ENCODE measurements at regions of chr3 and their contacts with region 1.

Region 1: GRCh38 chr3:15268033-15268631 is 62.1 kb downstream of the CAPN7 start:
- DNase-seq: peak; percentile 67 to 93 (median 82)
- ATAC-seq: peak; percentile 28 to 62 (median 43)
- H3K4me3 ChIP-seq: no peak overlapping the region
- H3K4me3 Mint-ChIP-seq: peak overlapping the region in 1 of 3 donors; percentile 73
- H3K27ac ChIP-seq: peak overlapping the region; percentile 72
- H3K27ac Mint-ChIP-seq: peak overlapping the region; percentile 43 to 73
- H3K4me1 ChIP-seq: peaks cover 39 to 82% of the 10 kb centered on the region in 2 experiments
- H3K4me1 Mint-ChIP-seq: peaks cover 76 to 88% (median 85%) of the 10 kb centered on the region in 3 donors
- H3K27me3 ChIP-seq: no peaks in the 10 kb centered on the region
- H3K27me3 Mint-ChIP-seq: no peaks in the 10 kb centered on the region

Region 2: DNA sequence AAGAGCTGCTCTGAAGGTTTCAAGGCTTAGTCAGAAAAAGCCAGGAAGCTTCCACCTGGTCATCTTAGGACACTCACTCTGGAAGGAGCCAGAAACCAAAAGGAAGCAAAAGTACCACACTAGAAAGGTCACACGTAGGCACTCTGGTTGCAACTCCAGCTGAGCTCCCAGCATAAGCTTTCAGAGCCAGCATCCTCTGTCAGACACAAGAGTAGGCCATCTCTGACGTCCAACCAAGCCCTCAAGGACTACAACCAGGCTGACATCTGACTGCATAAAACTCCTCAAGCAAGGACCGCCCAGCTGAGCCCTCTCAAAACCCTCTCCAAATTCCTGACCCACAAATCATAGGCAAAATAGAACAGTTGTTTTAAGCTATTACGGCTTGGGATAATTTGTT is 51.4 kb after region 1 on chr3:
- CTCF ChIA-PET with region 1: interaction called, 6 to 14 read pairs
- POLR2A ChIA-PET with region 1: interaction called in 1 of 2 experiments, 4 read pairs
- DNase-seq: no peak
- ATAC-seq: no peak
- H3K4me3 ChIP-seq: no peak overlapping the region
- H3K4me3 Mint-ChIP-seq: peak overlapping the region in 2 of 3 donors; percentile 17 to 21
- H3K27ac ChIP-seq: no peak overlapping the region
- H3K27ac Mint-ChIP-seq: peak overlapping the region; percentile 80 to 88
- H3K4me1 ChIP-seq: peaks cover 15 to 59% of the 10 kb centered on the region in 2 experiments
- H3K4me1 Mint-ChIP-seq: peaks cover 70 to 86% (median 81%) of the 10 kb centered on the region in 3 donors
- H3K27me3 ChIP-seq: no peaks in the 10 kb centered on the region
- H3K27me3 Mint-ChIP-seq: no peaks in the 10 kb centered on the region

Region 3: GRCh38 chr3:15332405-15333098 is 64.4 kb after region 1 on chr3 and contains the start of gene SH3BP5:
- CTCF ChIA-PET with region 1: interaction called, 14 to 46 read pairs
- POLR2A ChIA-PET with region 1: interaction called in 1 of 2 experiments, 3 read pairs
- DNase-seq: peak; percentile 30 to 86 (median 64)
- ATAC-seq: peak; percentile 93 to 95 (median 94)
- H3K4me3 ChIP-seq: peak within 1 kb of the TSS; percentile 77 to 95
- H3K4me3 Mint-ChIP-seq: peak within 1 kb of the TSS; percentile 88 to 96 (median 96)
- H3K27ac ChIP-seq: peak within 1 kb of the TSS; percentile 55
- H3K27ac Mint-ChIP-seq: peak within 1 kb of the TSS; percentile 92 to 94
- H3K4me1 ChIP-seq: peaks cover 12 to 40% of the 10 kb centered on the region in 2 experiments
- H3K4me1 Mint-ChIP-seq: peaks cover 55 to 59% (median 56%) of the 10 kb centered on the region in 3 donors
- H3K27me3 ChIP-seq: no peaks in the 10 kb centered on the region
- H3K27me3 Mint-ChIP-seq: no peaks in the 10 kb centered on the region
- total RNA-seq, gene SH3BP5: 25.0 to 66.7 (median 41.7) TPM

Region 4: DNA sequence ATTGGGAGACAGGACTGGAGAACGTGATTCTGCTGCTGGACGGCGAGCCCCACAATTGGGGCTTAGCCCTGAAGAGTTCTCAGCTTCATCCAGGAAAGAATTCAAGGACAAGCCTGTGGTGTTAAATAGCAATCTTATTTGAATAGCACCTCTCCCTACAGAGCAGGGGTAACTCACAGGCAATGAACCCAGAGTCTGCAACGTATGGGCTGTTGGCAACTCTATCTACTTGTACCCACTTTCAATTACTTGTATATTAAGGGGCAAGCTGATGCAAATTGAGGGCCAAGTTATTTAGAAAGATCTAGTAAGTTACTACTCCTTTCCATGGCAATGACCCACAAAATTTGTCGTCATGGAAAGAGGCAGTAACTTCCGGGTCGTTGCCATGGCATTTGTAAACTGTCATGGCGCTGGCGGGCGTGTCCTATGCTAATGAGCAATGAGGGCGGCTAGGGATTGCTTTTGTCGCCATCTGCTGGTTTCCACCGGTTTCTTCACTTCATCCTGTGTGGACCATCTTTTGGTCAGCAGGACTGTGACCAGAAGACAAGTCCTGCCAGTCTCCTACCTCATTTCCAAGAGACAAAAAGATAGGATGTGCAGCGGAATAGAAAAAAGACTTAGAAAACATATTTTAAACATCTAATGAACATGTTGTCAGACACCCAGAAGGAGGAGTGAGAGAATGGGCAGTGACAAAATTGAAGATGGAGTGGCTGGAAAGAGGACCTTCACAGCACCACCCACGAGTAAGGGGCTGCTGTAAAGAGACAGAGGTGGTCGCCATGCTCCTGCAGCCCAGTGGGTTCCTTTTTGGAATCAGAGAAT is 110.0 kb after region 1 on chr3:
- CTCF ChIA-PET with region 1: interaction called, 15 to 46 read pairs
- POLR2A ChIA-PET with region 1: interaction called in 1 of 2 experiments, 5 read pairs
- DNase-seq: peak; percentile 78 to 98 (median 94)
- ATAC-seq: peak; percentile 94 to 98 (median 97)
- H3K4me3 ChIP-seq: peak overlapping the region in 1 of 2 donors; percentile 7
- H3K4me3 Mint-ChIP-seq: peak overlapping the region in 1 of 3 donors; percentile 17
- H3K27ac ChIP-seq: peak overlapping the region; percentile 92
- H3K27ac Mint-ChIP-seq: peak overlapping the region; percentile 81 to 86
- H3K4me1 ChIP-seq: peaks cover 0 to 4% of the 10 kb centered on the region in 2 experiments
- H3K4me1 Mint-ChIP-seq: peaks cover 8 to 12% (median 11%) of the 10 kb centered on the region in 3 donors
- H3K27me3 ChIP-seq: no peaks in the 10 kb centered on the region
- H3K27me3 Mint-ChIP-seq: no peaks in the 10 kb centered on the region

Region 5: DNA sequence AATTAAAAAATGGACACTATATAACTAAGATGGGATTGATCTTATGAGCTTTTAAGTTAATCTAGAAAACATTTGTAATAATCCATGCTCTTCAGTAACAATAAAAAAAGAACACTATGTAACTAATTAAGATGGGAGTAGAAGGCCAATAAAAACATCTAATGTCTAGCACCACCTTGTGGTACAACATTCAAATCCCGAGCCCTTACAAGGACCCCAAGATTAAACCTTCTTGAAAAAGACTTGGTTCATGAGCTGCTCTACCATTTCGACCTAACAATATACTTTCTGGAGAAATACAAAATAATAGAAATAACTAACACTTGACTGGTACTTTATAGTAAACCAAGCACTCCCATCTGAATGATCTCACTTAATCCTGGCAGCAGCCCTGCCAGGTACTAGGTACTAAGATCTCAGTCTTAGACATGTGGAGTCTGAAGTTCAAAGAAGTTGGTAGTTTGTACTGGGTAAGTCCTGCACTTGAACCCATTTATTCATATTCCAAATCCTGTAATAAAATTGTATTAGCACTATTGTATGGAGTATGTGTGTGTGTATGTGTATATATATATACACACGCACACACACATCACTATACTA is 137.4 kb after region 1 on chr3:
- CTCF ChIA-PET with region 1: interaction called, 19 to 52 read pairs
- POLR2A ChIA-PET with region 1: interaction called in 1 of 2 experiments, 3 read pairs
- DNase-seq: peak in 7 of 35 experiments; percentile 12 to 76 (median 21)
- ATAC-seq: peak in 2 of 4 experiments; percentile 43 to 69
- H3K4me3 ChIP-seq: no peak overlapping the region
- H3K4me3 Mint-ChIP-seq: no peak overlapping the region
- H3K27ac ChIP-seq: no peak overlapping the region
- H3K27ac Mint-ChIP-seq: no peak overlapping the region
- H3K4me1 ChIP-seq: peaks cover 0 to 2% of the 10 kb centered on the region in 2 experiments
- H3K4me1 Mint-ChIP-seq: peaks cover 0 to 16% (median 7%) of the 10 kb centered on the region in 3 donors
- H3K27me3 ChIP-seq: no peaks in the 10 kb centered on the region
- H3K27me3 Mint-ChIP-seq: no peaks in the 10 kb centered on the region

Measured in T-cell (primary cell).